ENCODE measurements at regions of chr7 and their contacts with region 1.

Region 1: GRCh38 chr7:71131256-71132126 is 453 bp upstream of the GALNT17 start:
- DNase-seq: peak; percentile 58 to 92
- ATAC-seq: peak; percentile 71
- H3K4me3 ChIP-seq: peak overlapping the region; percentile 55 to 56
- H3K27ac ChIP-seq: no peak overlapping the region
- H3K4me1 ChIP-seq: no peaks in the 10 kb centered on the region
- H3K27me3 ChIP-seq: no peaks in the 10 kb centered on the region

Region 2: DNA sequence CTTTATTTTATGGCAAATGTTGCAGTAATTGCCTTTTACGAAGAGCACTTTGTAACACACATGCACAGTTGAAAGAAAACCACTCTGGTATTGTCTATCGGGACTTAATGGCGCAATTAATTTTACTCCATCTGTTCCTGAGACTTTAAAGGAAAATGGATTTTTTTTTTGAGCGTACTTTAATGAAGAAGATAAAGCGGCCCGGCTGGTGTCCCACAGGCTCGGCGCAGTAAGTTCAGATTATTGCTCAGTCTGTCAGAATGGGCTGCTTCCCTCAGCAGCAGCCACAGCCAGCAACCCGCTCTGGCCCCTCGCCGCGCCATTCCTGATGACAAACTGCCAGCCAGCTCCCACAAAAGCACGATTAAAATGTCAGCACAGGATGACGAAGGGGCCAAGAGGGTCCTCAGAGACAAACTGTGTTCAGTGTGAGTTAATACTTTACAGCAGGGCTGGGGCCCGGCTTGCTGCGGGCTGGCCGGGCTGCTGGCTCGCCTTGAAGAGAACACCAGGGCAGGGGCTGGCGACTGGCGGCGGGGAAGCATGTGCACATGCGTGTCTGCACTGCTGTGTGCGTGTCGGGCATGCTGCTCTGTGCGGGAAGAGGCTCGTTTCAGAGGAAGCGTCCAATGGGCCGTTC is 500.6 kb before region 1 on chr7:
- intact Hi-C with region 1: no loop called
- DNase-seq: peak; percentile 64 to 85
- ATAC-seq: peak; percentile 59
- H3K4me3 ChIP-seq: no peak overlapping the region
- H3K27ac ChIP-seq: no peak overlapping the region
- H3K4me1 ChIP-seq: no peaks in the 10 kb centered on the region
- H3K27me3 ChIP-seq: no peaks in the 10 kb centered on the region

Region 3: DNA sequence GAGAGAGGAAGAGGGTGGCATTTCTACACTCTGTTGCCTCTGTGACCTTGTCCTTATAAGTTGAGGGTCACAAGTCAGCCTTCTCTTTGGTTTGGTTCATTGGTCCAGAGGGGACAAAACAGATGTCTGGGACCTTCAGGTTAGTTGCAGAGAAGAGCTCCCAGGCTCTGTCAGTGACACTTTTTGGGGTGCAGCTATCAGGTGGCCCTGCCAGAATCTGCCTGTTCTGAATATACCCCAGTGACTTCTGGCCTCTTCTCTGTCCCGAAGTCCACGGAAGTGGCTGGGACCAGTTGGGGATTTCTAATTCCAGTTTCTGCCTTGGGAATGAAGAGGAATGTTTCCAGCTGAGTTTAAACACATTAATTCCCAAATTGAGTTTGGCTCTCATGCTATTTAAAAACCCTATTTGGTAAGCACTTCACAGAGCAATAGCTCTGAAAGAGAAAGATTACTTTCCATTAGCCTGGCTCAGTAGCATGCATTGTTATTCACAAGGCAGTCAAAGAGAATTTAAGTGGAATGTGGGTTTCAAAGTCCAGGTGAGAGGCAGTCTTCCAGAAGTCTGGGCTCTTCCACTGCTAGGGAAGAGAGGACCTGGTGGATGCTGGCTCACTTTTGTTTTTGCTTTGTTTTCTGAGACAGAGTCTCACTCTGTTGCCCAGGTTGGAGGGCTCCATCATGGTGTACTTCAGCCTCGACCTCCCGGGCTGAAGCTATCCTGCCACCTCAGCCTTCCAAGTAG is 237.3 kb before region 1 on chr7:
- intact Hi-C with region 1: no loop called
- DNase-seq: no peak
- ATAC-seq: no peak
- H3K4me3 ChIP-seq: no peak overlapping the region
- H3K27ac ChIP-seq: no peak overlapping the region
- H3K4me1 ChIP-seq: no peaks in the 10 kb centered on the region
- H3K27me3 ChIP-seq: peaks cover 0 to 1% of the 10 kb centered on the region in 2 donors

Region 4: DNA sequence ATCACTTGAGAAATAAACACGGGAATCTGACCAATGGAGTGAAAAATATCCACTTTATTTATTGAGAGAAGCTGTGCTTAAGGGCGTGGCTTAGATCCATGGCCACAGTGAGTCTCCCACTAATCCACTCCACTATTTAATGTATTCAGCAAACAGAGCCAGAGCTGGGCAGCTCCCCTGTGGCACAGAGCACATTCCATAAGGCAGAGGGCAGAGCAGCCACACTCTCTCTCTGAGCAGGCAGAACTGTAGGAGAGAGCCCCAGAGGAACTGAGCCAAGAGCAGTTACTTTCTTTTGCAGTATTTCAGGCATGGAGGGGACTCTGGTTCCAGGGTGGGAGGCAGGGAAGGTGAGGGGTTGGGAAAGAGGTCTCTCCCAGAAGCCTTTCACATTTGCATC is 106.5 kb after region 1 on chr7:
- intact Hi-C with region 1: loop called in 1 of 2 experiments (anchors 10 kb)
- DNase-seq: peak in 1 of 2 donors; percentile 50
- ATAC-seq: peak; percentile 63
- H3K4me3 ChIP-seq: no peak overlapping the region
- H3K27ac ChIP-seq: no peak overlapping the region
- H3K4me1 ChIP-seq: peaks cover 0 to 2% of the 10 kb centered on the region in 2 donors
- H3K27me3 ChIP-seq: no peaks in the 10 kb centered on the region

Region 5: DNA sequence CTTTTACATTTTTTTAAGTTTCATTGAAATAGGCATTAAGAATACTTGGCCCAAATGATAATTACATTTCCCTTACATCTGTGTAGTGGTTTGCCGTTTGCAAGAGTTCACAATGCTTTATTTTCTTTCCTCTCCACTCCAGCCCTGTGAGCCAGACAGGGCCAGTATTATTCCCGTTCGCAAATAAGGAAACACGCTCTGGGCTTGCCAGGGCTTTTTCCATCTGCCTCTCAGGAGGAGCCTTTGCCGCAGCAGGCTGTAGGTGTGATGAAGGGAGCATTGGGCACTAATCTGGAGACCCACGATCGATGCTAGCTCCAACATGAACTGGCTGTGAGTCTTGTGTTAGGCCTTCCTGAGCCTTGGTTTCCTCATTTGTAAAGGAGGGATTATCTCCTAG is 154.8 kb after region 1 on chr7:
- intact Hi-C with region 1: loop called in 1 of 2 experiments (anchors 10 kb)
- DNase-seq: no peak
- ATAC-seq: peak; percentile 61
- H3K4me3 ChIP-seq: no peak overlapping the region
- H3K27ac ChIP-seq: no peak overlapping the region
- H3K4me1 ChIP-seq: peaks cover 0 to 1% of the 10 kb centered on the region in 2 donors
- H3K27me3 ChIP-seq: no peaks in the 10 kb centered on the region

Region 6: GRCh38 chr7:71308096-71308495 is 176.6 kb after region 1 on chr7:
- intact Hi-C with region 1: loop called in 1 of 2 experiments (anchors 10 kb)
- DNase-seq: peak; percentile 85 to 88
- ATAC-seq: peak; percentile 90
- H3K4me3 ChIP-seq: no peak overlapping the region
- H3K27ac ChIP-seq: peak overlapping the region; percentile 93 to 97
- H3K4me1 ChIP-seq: peaks cover 2 to 14% of the 10 kb centered on the region in 2 donors
- H3K27me3 ChIP-seq: no peaks in the 10 kb centered on the region

Region 7: DNA sequence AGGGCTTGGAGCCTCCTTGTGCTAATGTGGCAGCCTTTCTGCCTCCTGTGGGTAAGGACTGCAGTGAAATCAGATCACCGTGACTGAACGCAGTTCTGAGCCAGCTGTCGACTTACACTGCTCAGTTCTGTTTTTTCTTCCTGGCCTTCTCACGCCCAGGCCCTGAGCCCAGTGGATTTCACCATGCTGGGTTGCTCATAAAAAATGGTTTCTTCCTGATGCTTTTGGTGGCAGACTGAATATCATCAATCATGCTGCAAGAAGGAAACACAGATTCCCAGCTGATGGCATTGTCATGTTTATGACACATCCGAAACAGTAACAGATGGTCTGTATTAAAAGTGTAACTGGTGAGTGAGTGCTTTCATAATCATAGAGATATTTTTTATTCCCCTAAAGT is 390.0 kb after region 1 on chr7:
- intact Hi-C with region 1: no loop called
- DNase-seq: peak in 1 of 2 donors; percentile 46
- ATAC-seq: no peak
- H3K4me3 ChIP-seq: no peak overlapping the region
- H3K27ac ChIP-seq: no peak overlapping the region
- H3K4me1 ChIP-seq: no peaks in the 10 kb centered on the region
- H3K27me3 ChIP-seq: no peaks in the 10 kb centered on the region

Region 8: DNA sequence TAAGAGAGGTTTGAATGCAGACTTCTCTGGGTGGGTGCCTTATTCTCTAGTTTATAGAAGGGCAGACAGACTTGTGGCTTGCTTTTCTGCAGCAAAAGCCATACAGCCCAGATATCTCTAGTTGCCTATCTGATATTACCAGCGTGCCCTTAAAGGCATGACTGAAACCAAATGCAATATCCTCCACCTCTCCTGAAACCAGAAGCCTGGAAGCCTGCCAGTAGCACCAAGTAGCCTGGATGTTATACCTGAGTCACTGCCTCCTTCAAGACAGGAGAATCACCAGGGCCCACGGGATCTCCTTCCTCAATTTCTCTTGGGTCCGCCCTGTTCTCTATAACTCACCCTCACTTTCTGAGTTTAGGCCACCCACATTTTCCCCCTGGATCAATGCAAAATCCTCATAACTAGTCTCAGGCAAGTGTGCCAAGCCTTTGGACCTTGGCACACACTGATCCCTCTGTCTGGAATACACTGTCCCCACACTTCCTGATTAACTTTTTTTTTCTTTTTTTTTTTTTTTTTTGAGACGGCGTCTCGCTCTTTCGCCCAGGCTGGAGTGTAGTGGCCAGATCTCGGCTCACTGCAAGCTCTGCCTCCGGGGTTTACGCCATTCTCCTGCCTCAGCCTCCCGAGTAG is 638.9 kb after region 1 on chr7:
- intact Hi-C with region 1: no loop called
- DNase-seq: no peak
- ATAC-seq: no peak
- H3K4me3 ChIP-seq: no peak overlapping the region
- H3K27ac ChIP-seq: no peak overlapping the region
- H3K4me1 ChIP-seq: no peaks in the 10 kb centered on the region
- H3K27me3 ChIP-seq: no peaks in the 10 kb centered on the region